CD4-positive, alpha-beta memory T cell (primary cell): ENCODE measurements at regions of chr9 and their contacts with region 1.

Region 1: DNA sequence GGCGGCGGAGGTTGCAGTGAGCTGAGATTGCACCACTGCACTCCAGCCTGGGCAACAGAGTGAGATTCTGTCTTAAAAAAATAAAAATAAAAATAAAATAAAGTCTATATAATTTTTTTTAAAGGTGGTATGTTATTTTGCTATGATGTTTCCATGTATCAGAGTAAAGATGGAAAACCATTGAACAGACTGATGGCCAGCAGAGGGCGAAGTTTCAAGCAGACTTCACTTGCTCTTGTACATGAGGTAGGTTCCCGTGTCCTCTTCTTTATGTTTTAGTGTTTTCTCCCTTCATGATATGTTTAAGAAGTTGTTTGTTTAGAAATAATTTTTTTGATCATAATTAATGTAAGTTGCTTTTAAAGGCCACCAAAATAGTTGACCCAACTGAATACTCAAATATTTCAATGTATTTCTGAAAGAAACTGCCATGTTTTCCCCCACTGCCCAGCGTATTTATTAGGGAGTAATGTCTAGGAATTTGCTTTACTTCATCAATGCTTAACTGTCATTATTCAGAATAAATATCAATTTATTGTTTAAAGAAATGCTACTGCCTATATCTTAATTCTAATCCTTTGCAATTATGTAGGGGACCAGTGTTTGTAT is 146.4 kb downstream of the HACD4 start:
- DNase-seq: peak; percentile 43 to 57 (median 50)
- H3K4me3 ChIP-seq: no peak overlapping the region
- H3K4me3 Mint-ChIP-seq: no peak overlapping the region
- H3K27ac ChIP-seq: no peak overlapping the region
- H3K27ac Mint-ChIP-seq: no peak overlapping the region
- H3K4me1 ChIP-seq: no peaks in the 10 kb centered on the region
- H3K4me1 Mint-ChIP-seq: no peaks in the 10 kb centered on the region
- H3K27me3 ChIP-seq: no peaks in the 10 kb centered on the region
- H3K27me3 Mint-ChIP-seq: no peaks in the 10 kb centered on the region

Region 2: GRCh38 chr9:20872340-20872977 is 12.6 kb before region 1 on chr9:
- CTCF ChIA-PET with region 1: interaction called, 39 read pairs
- POLR2A ChIA-PET with region 1: no interaction called
- intact Hi-C with region 1: no loop called
- DNase-seq: no peak
- H3K4me3 ChIP-seq: no peak overlapping the region
- H3K4me3 Mint-ChIP-seq: no peak overlapping the region
- H3K27ac ChIP-seq: no peak overlapping the region
- H3K27ac Mint-ChIP-seq: peak overlapping the region in 1 of 7 donors; percentile 60
- H3K4me1 ChIP-seq: no peaks in the 10 kb centered on the region
- H3K4me1 Mint-ChIP-seq: peaks cover 0 to 5% (median 2%) of the 10 kb centered on the region in 4 donors
- H3K27me3 ChIP-seq: no peaks in the 10 kb centered on the region
- H3K27me3 Mint-ChIP-seq: no peaks in the 10 kb centered on the region